ENCODE measurements at regions of chr1 and their contacts with region 1.

Region 1: GRCh38 chr1:52569449-52570210 is 16.7 kb upstream of the TUT4 start:
- DNase-seq: no peak
- H3K4me3 ChIP-seq: no peak overlapping the region
- H3K27ac ChIP-seq: no peak overlapping the region
- H3K4me1 ChIP-seq: no peaks in the 10 kb centered on the region
- H3K27me3 ChIP-seq: no peaks in the 10 kb centered on the region
- CTCF ChIP-seq: no peak
- EP300 ChIP-seq: no peak
- POLR2A ChIP-seq: no peak

Region 2: DNA sequence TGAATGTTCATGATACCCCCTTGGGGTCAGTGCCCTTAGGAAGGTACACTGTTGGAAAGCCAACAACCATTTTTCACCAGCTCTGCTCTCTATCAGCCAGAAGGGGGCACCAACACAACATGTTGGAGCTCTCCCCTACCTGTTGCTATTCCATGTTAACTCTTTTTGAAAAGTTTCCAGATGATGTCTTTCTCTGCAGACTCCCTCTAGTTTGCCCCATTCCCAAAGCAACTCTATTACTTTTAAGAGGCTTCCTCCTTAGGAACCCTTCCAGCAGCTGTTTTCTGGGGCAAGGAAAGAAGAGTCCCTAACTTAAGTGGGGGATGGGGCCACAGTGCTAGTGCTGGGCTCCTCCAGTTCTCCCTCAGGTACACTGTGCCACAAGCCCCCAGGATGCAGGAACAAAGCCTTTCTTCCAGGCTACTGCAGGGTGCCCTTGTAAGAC is 1291.4 kb after region 1 on chr1:
- intact Hi-C with region 1: loop called in 1 of 4 experiments (anchors 5 kb)
- DNase-seq: peak in 3 of 5 donors; percentile 26 to 37 (median 35)
- H3K4me3 ChIP-seq: no peak overlapping the region
- H3K27ac ChIP-seq: no peak overlapping the region
- H3K4me1 ChIP-seq: no peaks in the 10 kb centered on the region
- H3K27me3 ChIP-seq: no peaks in the 10 kb centered on the region
- CTCF ChIP-seq: peak; percentile 44 to 53 (median 49)
- EP300 ChIP-seq: no peak
- POLR2A ChIP-seq: no peak